CD8-positive, alpha-beta memory T cell (primary cell): ENCODE measurements at regions of chr3 and their contacts with region 1.

Region 1: GRCh38 chr3:161310649-161311423 is 60.5 kb downstream of the SPTSSB start:
- DNase-seq: peak; percentile 11 to 85 (median 75)
- H3K4me3 ChIP-seq: no peak overlapping the region
- H3K4me3 Mint-ChIP-seq: peak overlapping the region; percentile 10 to 67 (median 51)
- H3K27ac ChIP-seq: no peak overlapping the region
- H3K27ac Mint-ChIP-seq: peak overlapping the region in 7 of 8 donors; percentile 46 to 97 (median 80)
- H3K4me1 ChIP-seq: peaks cover 56% of the 10 kb centered on the region
- H3K4me1 Mint-ChIP-seq: peaks cover 63 to 73% (median 65%) of the 10 kb centered on the region in 3 donors
- H3K27me3 ChIP-seq: no peaks in the 10 kb centered on the region
- H3K27me3 Mint-ChIP-seq: peaks cover 2 to 4% of the 10 kb centered on the region in 2 donors

Region 2: DNA sequence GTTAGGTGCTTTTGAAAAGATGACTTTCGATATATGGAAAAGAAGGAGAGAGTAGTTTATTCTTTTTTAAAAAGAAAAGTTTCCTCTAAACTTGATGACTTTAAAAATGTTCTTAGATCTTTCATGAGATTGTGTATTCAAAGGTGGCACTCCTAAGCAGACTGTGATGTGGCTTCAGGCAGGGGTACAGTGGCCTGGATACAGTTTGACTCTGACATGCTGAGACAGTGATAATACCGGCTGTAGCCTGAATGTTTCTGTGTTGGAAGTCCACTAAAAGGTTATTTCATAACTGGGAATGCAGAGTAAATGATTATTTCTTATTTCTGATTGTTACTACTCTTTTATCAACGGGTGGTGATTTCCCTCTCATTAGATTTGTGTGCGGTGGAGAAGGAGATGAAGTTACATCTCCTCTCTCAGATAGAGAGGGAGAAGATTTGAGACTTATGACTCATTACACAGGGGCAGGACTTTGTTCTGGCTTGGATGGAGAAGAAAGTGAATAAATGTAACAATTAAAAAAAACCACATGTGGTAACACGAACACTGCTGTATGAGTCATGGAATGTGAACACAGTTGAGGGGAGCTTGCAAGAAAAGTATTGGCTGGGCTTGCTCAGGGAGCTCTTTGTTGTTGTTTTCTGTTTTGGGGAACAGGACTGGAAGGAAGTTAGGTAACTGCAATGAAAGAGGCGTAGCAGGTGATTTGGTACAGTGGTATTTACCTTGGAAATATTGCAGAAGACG is 38.9 kb after region 1 on chr3:
- CTCF ChIA-PET with region 1: interaction called, 3 read pairs
- POLR2A ChIA-PET with region 1: interaction called, 10 read pairs
- DNase-seq: peak in 4 of 5 donors; percentile 1 to 66 (median 46)
- H3K4me3 ChIP-seq: no peak overlapping the region
- H3K4me3 Mint-ChIP-seq: peak overlapping the region in 5 of 7 donors; percentile 6 to 47 (median 18)
- H3K27ac ChIP-seq: no peak overlapping the region
- H3K27ac Mint-ChIP-seq: peak overlapping the region; percentile 6 to 84 (median 14)
- H3K4me1 ChIP-seq: peaks cover 20% of the 10 kb centered on the region
- H3K4me1 Mint-ChIP-seq: peaks cover 22 to 28% (median 24%) of the 10 kb centered on the region in 3 donors
- H3K27me3 ChIP-seq: no peaks in the 10 kb centered on the region
- H3K27me3 Mint-ChIP-seq: peaks cover 4 to 10% of the 10 kb centered on the region in 2 donors

Region 3: DNA sequence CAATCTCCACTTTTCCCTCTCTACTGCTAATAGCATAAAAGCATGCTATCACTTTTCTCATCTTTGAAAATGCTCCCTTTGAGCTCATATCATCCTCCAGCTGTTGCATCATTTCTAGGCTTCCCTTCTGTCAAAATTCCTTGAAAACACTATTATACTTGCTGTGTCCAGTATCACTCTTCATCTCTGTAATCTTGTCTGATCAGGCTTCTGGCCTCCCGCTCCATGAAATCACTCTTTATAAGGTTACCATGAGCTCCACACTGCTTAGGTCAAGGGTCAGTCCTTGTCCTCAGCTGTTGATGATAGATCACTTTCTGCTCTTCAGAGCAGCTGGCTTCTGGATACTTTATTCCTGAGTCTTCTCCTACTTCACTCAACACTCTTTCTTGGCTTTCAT is 111.4 kb after region 1 on chr3:
- CTCF ChIA-PET with region 1: interaction called, 3 read pairs
- POLR2A ChIA-PET with region 1: interaction called, 12 read pairs
- DNase-seq: no peak
- H3K4me3 ChIP-seq: no peak overlapping the region
- H3K4me3 Mint-ChIP-seq: no peak overlapping the region
- H3K27ac ChIP-seq: no peak overlapping the region
- H3K27ac Mint-ChIP-seq: no peak overlapping the region
- H3K4me1 ChIP-seq: no peaks in the 10 kb centered on the region
- H3K4me1 Mint-ChIP-seq: peaks cover 0 to 7% (median 4%) of the 10 kb centered on the region in 3 donors
- H3K27me3 ChIP-seq: no peaks in the 10 kb centered on the region
- H3K27me3 Mint-ChIP-seq: peaks cover 0 to 4% of the 10 kb centered on the region in 2 donors